ENCODE measurements at regions of chr11 and their contacts with region 1.

Region 1: DNA sequence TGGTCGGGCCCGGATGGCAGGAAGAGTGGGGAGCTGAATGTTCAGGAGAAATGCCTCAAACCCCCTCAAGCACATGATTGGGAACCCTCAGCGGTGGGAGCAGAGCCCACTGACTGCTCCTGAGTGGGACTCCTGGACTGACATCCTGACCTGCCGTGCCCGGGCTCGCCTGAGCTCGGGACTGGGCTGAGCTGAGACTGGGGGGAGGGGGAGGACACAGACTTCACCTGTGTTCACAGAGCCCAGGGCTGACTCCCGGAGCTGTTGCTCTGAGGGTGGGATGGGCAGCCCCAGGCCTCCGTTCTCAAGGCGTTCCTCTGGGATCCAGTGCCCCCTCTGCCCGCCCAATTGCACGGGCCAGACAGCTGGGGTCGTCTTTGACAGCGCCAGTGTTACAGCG is 24.6 kb downstream of the DAGLA start:
- DNase-seq: no peak
- ATAC-seq: no peak

Region 2: GRCh38 chr11:61718621-61719302 is 13.9 kb after region 1 on chr11:
- intact Hi-C with region 1: no loop called
- DNase-seq: peak; percentile 78
- ATAC-seq: peak; percentile 82

Region 3: DNA sequence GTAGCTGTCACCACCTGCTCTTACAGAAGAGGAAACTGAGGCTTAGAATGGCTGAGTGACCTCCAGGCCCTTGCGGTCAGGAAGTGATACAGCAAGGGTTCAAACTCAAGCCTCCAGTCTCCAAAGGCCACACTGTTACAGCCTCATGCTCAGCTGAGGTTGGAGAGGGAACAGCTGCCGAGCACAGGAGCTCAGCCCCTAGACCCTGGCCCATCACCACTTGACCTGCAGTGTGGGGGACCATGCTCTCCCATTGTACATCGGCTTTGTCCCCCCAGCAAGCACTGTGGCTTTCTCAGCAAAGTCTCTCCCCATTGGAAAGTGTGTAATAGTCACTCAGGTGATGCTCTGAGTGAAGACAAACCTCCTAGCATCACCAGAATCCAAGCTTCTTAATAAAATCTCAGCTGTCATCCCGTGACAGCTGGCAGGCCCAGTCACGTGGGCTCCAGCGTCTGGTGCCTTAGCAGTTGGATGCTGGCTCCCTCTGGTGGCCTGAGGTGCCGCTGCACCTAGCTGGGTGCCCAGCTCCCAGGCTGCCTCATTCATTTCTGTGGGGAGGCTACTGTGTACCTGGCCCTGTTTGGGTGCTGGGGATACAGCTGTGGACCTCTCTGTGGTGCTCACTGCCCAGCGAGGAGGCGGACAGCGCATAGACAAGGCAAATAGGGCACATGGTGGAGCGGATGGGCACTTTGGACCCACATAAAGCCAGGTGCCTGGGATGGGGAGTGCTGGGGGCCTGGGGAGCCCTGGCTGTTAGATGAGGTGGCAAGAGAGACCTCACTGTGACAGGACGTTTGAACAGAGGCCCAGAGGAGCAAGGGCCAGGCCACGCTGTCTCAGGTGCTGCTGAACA is 28.5 kb after region 1 on chr11:
- intact Hi-C with region 1: no loop called
- DNase-seq: peak; percentile 95
- ATAC-seq: peak; percentile 90

Region 4: DNA sequence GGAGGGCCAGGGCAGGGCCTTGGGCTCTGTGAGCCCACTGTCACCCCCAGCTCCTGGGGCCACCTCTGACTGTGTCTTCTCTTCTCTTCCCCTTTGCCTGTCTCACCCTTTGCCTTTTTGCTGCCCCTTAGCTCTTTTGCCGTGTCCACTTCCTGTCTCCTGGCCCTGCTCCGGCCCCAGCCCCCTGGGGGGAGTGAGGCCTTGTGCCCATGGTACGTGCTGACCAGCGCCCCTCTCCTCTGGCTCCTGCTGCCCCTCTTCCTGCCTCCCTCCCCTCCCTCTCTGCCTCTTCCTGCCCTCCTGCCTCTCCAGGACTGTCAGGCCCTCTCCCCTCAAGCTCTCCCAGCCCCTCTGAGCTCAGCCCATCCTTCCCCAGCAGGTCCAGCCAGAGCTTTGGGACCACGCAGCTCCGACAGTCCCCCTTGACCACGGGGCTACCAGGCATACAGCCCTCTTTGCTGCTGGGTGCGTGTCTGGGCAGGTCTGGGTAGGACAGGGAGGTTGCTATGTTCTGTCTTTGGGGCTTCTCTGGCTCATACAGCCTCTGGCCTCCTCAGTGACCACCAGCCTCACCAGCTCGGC is 75.8 kb after region 1 on chr11:
- intact Hi-C with region 1: loop called (anchors 1 kb)
- DNase-seq: no peak
- ATAC-seq: no peak